A549 (cell line): ENCODE measurements at regions of chr19 and their contacts with region 1.

Region 1: DNA sequence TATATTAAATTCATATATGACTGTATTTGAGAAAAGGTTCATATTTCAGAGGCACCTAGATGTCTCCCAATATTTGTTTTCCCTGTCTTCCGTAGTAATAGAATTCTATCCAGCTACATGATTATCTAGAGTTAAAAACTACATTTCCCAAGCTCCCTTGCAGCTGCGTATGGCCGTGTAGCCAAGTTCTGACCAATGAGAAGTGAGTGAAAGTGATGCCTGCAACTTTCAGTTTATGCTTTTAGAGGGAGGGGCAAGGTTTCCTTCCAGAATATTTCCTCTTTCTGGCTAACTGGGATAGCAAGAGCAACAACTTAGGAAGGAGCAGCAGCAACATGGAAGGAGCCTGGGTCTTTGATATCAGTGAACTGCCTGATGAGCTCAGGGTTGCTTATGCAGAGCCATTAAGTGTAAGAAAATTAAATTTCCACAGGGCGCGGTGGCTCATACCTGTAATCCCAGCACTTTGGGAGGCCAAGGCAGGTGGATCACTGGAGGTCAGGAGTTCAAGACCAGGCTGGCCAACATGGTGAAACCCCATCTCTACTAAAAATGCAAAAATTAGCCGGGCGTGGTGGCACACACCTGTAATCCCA is 23.2 kb upstream of the CYP2A13 start:
- DNase-seq: peak; percentile 69
- ATAC-seq: peak; percentile 65 to 94; a peak in 5 of 6 replicates
- H3K4me3 ChIP-seq: no peak overlapping the region
- H3K27ac ChIP-seq: no peak overlapping the region
- H3K4me1 ChIP-seq: no peaks in the 10 kb centered on the region
- CTCF ChIP-seq: no peak
- EP300 ChIP-seq: no peak
- POLR2A ChIP-seq: no peak
- RAD21 ChIP-seq: no peak

Region 2: GRCh38 chr19:41083516-41083915 is 18.4 kb after region 1 on chr19:
- CTCF ChIA-PET with region 1: interaction called, 16 read pairs
- POLR2A ChIA-PET with region 1: no interaction called
- DNase-seq: peak in 1 of 2 experiments; percentile 33
- ATAC-seq: 0 out of 6 replicates have a peak, but pooled peaks of 1 of the 2 experiments have one; percentile 12
- H3K4me3 ChIP-seq: no peak overlapping the region
- H3K27ac ChIP-seq: no peak overlapping the region
- H3K4me1 ChIP-seq: no peaks in the 10 kb centered on the region
- CTCF ChIP-seq: no peak
- EP300 ChIP-seq: no peak
- POLR2A ChIP-seq: no peak
- RAD21 ChIP-seq: no peak

Region 3: GRCh38 chr19:41123716-41124294 is 58.7 kb after region 1 on chr19:
- CTCF ChIA-PET with region 1: no interaction called
- POLR2A ChIA-PET with region 1: no interaction called
- DNase-seq: no peak
- ATAC-seq: no peak
- H3K4me3 ChIP-seq: no peak overlapping the region
- H3K27ac ChIP-seq: no peak overlapping the region
- H3K4me1 ChIP-seq: peaks cover 10% of the 10 kb centered on the region
- CTCF ChIP-seq: no peak
- EP300 ChIP-seq: no peak
- POLR2A ChIP-seq: no peak
- RAD21 ChIP-seq: no peak